OCI-LY7 (cell line): ENCODE measurements at regions of chr11 and their contacts with region 1.

Region 1: DNA sequence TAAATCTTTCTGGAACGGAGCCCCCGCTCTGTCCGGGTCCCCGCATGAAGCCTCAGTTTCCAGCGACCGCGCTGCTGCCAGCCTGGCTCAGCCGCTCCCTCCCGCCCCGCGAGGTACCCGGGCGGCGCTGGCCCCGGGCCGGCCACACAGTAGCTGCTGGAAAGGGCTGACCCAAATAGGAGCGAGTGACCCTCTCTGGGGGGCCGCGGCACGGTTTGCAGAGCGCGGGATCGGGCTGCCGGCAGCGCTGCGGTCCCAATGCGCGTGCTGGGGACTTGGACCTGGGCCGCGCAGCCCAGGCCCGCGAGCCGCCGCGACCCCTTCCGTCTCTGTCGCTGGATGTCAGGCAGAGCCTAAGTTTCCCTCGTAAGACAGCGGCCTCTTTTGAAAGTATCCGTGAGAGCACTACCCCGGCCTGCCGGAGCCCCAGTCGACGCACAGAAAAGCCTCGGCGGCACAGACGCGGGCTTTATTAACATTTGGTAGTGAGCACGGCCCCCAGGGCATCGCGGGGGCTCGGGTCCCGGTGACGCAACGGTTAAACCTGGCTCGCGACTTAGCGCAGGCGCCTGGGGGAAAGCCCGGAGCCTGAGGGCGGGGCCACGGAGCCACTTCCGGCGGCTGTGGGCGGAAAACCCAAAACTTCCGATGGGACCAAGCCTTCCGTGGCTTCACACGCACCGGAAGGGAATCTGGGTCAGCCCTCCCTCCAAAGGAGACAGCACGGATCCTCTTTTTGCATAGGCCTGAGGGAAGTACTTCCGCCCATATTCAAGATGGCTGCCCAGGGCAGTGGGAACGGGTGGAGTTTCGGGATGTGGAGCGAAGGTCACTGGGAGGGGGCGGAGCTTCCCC is 14.9 kb downstream of the BAD start:
- DNase-seq: peak; percentile 100
- H3K4me3 ChIP-seq: peak overlapping the region; percentile 86
- H3K27ac ChIP-seq: peak overlapping the region; percentile 91
- H3K4me1 ChIP-seq: peaks cover 27% of the 10 kb centered on the region
- CTCF ChIP-seq: peak; percentile 60

Region 2: GRCh38 chr11:64225612-64226506 is 43.7 kb before region 1 on chr11 and contains the starts of genes NUDT22 and TRPT1:
- CTCF ChIA-PET with region 1: no interaction called
- POLR2A ChIA-PET with region 1: no interaction called
- intact Hi-C with region 1: loop called (anchors 1 kb)
- DNase-seq: peak; percentile 95
- H3K4me3 ChIP-seq: peak within 1 kb of the TSS; percentile 83
- H3K27ac ChIP-seq: peak within 1 kb of the TSS; percentile 77
- H3K4me1 ChIP-seq: peaks cover 33% of the 10 kb centered on the region
- CTCF ChIP-seq: peak; percentile 66
- total RNA-seq, gene NUDT22: 54.6 and 81.4 TPM in 2 replicates
- total RNA-seq, gene TRPT1: 35.7 and 49.0 TPM in 2 replicates

Region 3: GRCh38 chr11:64246871-64247728 is 22.5 kb before region 1 on chr11 and contains the start of gene PPP1R14B:
- CTCF ChIA-PET with region 1: no interaction called
- POLR2A ChIA-PET with region 1: interaction called, 4 read pairs
- intact Hi-C with region 1: loop called (anchors 1 kb)
- DNase-seq: peak; percentile 85
- H3K4me3 ChIP-seq: peak within 1 kb of the TSS; percentile 88
- H3K27ac ChIP-seq: peak within 1 kb of the TSS; percentile 69
- H3K4me1 ChIP-seq: peaks cover 60% of the 10 kb centered on the region
- CTCF ChIP-seq: no peak
- total RNA-seq, gene PPP1R14B: 198 and 219 TPM in 2 replicates

Region 4: DNA sequence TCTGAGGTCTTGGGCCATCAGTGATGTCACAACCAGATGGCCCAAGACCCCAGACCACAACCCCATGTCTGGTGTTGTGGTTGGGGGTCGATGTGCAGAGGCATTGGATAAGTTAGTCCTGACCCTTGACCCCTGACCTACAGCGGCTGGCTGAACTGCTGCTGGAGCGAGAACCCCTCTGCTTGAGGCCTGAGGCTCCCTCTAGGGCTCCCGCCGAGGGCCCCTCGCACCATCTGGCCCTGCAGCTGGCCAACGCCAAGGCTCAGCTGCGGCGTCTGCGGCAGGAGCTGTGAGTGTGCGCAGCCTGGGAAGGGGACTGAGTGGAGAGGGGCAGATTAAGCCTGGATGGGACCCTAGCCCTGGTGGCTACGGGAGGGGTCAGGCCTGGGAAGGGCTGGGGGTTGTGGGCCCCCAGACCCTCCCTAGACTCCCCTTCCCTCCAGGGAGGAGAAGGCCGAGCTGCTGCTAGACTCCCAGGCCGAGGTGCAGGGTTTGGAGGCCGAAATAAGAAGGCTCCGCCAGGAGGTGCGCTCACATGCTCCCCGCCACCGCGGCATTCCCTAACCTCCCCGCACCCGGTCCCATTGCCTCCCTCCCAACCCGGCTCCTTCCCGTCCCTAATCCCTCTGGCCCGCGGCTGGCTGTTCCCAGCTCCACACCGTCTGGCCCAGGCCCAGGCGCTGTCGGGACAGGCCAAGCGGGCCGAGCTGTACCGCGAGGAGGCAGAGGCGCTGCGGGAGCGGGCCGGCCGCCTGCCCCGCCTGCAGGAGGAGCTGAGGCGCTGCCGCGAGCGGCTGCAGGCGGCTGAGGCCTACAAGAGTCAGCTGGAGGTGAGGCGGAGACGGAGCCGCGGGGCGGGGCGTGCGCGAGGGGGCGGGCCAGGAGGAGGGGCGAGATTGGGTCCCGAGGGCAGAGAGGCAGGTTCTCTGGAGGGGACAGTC is 72.5 kb after region 1 on chr11:
- CTCF ChIA-PET with region 1: no interaction called
- POLR2A ChIA-PET with region 1: no interaction called
- intact Hi-C with region 1: loop called (anchors 2 kb)
- DNase-seq: peak; percentile 91
- H3K4me3 ChIP-seq: peak overlapping the region; percentile 50
- H3K27ac ChIP-seq: no peak overlapping the region
- H3K4me1 ChIP-seq: peaks cover 40% of the 10 kb centered on the region
- CTCF ChIP-seq: peak; percentile 65